Ovary (tissue), 10 donors: ENCODE measurements at regions of chr7 and their contacts with region 1.

Region 1: GRCh38 chr7:126972571-126972970 is 280.2 kb downstream of the GRM8 start:
- DNase-seq: no peak
- H3K4me3 ChIP-seq: no peak overlapping the region
- H3K27ac ChIP-seq: no peak overlapping the region
- H3K4me1 ChIP-seq: no peaks in the 10 kb centered on the region
- H3K27me3 ChIP-seq: no peaks in the 10 kb centered on the region
- CTCF ChIP-seq: no peak
- EP300 ChIP-seq: no peak
- POLR2A ChIP-seq: no peak

Region 2: DNA sequence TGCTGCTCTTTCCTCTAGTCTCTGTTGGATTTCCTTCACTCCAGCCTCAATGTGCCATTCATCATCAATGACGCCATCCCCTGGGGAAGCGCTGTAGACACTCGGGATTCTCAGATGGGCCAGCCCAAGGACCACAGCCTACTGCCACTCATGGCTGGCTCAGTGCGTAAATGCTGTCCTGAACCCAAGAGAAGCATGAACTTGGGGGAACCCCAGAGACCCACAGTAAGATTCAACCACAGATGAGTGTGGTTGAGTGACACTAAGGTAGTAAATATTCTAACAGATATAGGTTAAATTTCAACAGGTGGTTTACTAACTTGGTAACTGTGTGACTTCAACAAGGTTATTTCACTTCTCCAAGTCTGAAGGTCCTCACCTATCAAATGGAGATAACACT is 23.9 kb before region 1 on chr7:
- intact Hi-C with region 1: loop called in 1 of 4 experiments (anchors 2 kb)
- DNase-seq: no peak
- H3K4me3 ChIP-seq: no peak overlapping the region
- H3K27ac ChIP-seq: no peak overlapping the region
- H3K4me1 ChIP-seq: no peaks in the 10 kb centered on the region
- H3K27me3 ChIP-seq: no peaks in the 10 kb centered on the region
- CTCF ChIP-seq: no peak
- EP300 ChIP-seq: no peak
- POLR2A ChIP-seq: no peak